CD8-positive, alpha-beta T cell (primary cell): ENCODE measurements at regions of chr2 and their contacts with region 1.

Region 1: GRCh38 chr2:173027181-173028128 is 48.2 kb upstream of the MAP3K20 start:
- DNase-seq: peak; percentile 39 to 84 (median 76)
- ATAC-seq: peak; percentile 79
- H3K4me3 ChIP-seq: no peak overlapping the region
- H3K4me3 Mint-ChIP-seq: no peak overlapping the region
- H3K27ac ChIP-seq: no peak overlapping the region
- H3K27ac Mint-ChIP-seq: no peak overlapping the region
- H3K4me1 ChIP-seq: no peaks in the 10 kb centered on the region
- H3K4me1 Mint-ChIP-seq: peaks cover 3% of the 10 kb centered on the region
- H3K27me3 ChIP-seq: peaks cover 0 to 2% of the 10 kb centered on the region in 2 experiments
- H3K27me3 Mint-ChIP-seq: peaks cover 5% of the 10 kb centered on the region
- CTCF ChIP-seq: peak; percentile 96

Region 2: DNA sequence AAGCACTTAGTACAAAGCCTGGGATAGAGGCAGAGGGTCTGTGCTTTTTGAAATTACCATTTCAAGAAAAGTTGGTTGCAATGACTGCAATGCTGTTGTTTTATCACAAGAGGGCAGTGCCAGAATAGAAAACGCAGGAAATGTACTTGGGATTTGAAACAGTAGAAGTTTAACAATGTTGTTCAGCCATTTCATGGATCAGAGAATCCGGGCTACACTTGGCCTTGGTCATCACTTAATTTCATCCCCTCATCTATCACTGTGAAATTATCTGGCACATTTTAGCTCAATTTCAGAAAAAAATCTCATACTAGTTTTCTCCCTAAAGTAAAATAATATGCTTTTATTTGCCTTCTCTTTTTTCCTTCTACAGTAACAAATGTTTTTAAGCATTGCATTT is 221.0 kb before region 1 on chr2:
- CTCF ChIA-PET with region 1: no interaction called
- POLR2A ChIA-PET with region 1: no interaction called
- intact Hi-C with region 1: loop called in 1 of 2 experiments (anchors 10 kb)
- DNase-seq: peak in 2 of 9 experiments; percentile 19 to 38
- ATAC-seq: no peak
- H3K4me3 ChIP-seq: no peak overlapping the region
- H3K4me3 Mint-ChIP-seq: no peak overlapping the region
- H3K27ac ChIP-seq: no peak overlapping the region
- H3K27ac Mint-ChIP-seq: no peak overlapping the region
- H3K4me1 ChIP-seq: no peaks in the 10 kb centered on the region
- H3K4me1 Mint-ChIP-seq: peaks cover 2% of the 10 kb centered on the region
- H3K27me3 ChIP-seq: peaks cover 0 to 4% of the 10 kb centered on the region in 2 experiments
- H3K27me3 Mint-ChIP-seq: no peaks in the 10 kb centered on the region
- CTCF ChIP-seq: peak; percentile 82

Region 3: DNA sequence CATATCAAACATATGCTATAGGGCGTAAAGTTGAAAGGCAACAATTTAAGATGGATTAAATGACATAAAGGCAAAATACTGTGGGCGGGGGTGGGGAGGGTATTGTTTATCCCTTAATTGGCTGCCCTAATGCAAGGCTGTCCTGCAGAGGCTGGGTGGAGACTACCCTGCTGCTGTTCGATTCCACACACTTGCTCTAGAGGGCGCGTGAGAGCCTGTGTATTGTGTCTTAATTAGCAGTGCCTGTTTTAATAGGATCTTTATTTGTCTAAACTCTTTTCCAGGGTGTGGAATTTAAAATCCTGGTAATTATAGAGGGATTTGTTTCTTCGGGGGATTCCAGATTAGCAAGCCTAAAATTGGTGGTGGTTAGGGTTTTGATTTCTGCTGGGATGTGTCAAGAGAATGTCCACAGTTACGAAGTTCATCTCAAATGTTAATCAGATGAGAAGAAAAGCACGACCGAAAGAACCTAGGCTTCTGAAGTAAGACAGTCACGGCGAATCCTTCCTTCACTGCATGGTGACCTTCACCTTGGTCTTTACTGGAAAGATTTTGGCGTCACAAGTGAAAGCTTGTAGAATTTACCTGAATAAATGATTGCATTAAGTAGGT is 55.3 kb before region 1 on chr2:
- CTCF ChIA-PET with region 1: interaction called, 4 read pairs
- POLR2A ChIA-PET with region 1: no interaction called
- intact Hi-C with region 1: loop called in 1 of 2 experiments (anchors 1 kb)
- DNase-seq: peak in 7 of 9 experiments; percentile 15 to 54 (median 25)
- ATAC-seq: peak; percentile 32
- H3K4me3 ChIP-seq: no peak overlapping the region
- H3K4me3 Mint-ChIP-seq: no peak overlapping the region
- H3K27ac ChIP-seq: no peak overlapping the region
- H3K27ac Mint-ChIP-seq: no peak overlapping the region
- H3K4me1 ChIP-seq: no peaks in the 10 kb centered on the region
- H3K4me1 Mint-ChIP-seq: peaks cover 18% of the 10 kb centered on the region
- H3K27me3 ChIP-seq: no peaks in the 10 kb centered on the region
- H3K27me3 Mint-ChIP-seq: peaks cover 4% of the 10 kb centered on the region
- CTCF ChIP-seq: peak; percentile 81

Region 4: DNA sequence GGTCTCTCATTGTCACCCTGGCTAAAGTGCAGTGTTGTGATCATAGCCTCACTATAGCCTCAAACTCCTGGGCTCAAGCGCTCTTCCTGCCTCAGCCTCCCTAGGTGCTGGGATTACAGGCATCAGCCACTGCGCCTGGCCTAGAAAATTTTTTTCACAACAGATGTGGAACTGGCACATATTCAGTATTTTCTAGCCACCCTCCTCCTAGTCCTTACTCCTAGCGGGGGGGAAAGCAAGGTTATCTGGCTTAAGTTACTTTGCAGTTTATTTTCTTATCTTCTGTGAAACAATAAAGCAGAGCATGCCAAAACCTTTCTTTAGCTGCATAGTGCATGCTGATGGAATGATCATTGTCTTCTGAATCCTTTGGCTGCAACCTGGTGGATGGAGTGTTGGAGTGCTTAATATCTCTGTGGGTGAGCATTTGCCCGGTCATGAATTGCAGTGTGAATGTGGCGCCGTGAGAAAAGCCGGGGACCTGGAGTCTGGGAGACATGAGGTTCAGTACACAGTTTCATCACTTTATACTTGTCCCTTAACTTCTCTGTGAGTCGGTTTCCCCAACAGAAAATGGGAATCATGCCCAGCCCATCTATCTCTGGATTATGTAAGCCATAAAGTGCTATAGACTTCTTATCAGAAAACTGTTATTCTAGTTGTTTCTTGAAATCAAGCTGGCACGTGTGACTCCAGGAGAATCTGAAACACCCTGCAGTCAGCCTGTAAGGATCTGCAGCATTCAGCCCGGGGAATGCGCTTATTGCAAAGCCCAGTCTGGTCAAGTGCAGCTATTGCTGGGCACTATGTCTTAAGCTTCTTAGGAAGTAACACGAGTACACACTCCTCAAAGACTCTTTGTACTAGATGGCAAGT is 10.0 kb after region 1 on chr2:
- CTCF ChIA-PET with region 1: interaction called, 13 read pairs
- POLR2A ChIA-PET with region 1: no interaction called
- intact Hi-C with region 1: no loop called
- DNase-seq: no peak
- ATAC-seq: no peak
- H3K4me3 ChIP-seq: no peak overlapping the region
- H3K4me3 Mint-ChIP-seq: no peak overlapping the region
- H3K27ac ChIP-seq: no peak overlapping the region
- H3K27ac Mint-ChIP-seq: no peak overlapping the region
- H3K4me1 ChIP-seq: no peaks in the 10 kb centered on the region
- H3K4me1 Mint-ChIP-seq: no peaks in the 10 kb centered on the region
- H3K27me3 ChIP-seq: no peaks in the 10 kb centered on the region
- H3K27me3 Mint-ChIP-seq: peaks cover 2% of the 10 kb centered on the region
- CTCF ChIP-seq: no peak

Region 5: DNA sequence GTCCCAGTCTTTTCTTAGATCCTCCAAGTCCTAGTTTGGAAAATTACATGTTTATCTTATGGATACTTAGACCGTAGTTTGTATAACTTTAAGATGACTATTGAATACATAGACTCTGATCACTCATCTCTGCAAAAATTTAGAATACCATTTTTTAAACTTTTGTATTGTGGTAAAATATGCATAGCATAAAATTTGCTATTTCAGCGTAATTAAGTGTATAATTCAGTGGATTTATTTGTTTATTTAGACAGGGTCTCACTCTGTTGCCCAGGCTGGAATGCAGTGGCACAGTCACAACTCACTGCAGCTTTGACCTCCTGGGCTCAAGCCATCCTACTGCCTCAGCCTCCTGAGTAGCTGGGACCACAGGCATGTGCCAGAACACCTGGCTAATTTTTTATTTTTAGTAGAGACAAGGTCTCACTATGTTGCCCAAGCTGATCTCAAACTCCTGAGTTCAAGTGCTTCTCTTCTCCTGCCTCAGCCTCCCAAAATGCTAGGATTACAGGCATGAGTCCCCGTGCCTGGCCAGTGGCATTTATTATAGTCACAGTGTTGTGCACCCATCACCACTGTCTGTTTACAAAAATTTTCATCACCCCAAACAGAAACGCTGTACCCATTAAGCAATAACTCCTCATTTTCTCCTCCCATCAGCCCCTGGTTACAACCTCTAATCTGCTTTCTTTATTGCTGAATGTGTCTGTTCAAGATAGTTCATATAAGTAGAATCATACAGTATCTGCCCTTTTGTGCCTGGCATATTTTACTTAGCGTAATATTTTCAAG is 138.2 kb after region 1 on chr2:
- CTCF ChIA-PET with region 1: no interaction called
- POLR2A ChIA-PET with region 1: no interaction called
- intact Hi-C with region 1: no loop called
- DNase-seq: no peak
- ATAC-seq: no peak
- H3K4me3 ChIP-seq: no peak overlapping the region
- H3K4me3 Mint-ChIP-seq: no peak overlapping the region
- H3K27ac ChIP-seq: no peak overlapping the region
- H3K27ac Mint-ChIP-seq: no peak overlapping the region
- H3K4me1 ChIP-seq: no peaks in the 10 kb centered on the region
- H3K4me1 Mint-ChIP-seq: no peaks in the 10 kb centered on the region
- H3K27me3 ChIP-seq: no peaks in the 10 kb centered on the region
- H3K27me3 Mint-ChIP-seq: peaks cover 4% of the 10 kb centered on the region
- CTCF ChIP-seq: no peak

Region 6: DNA sequence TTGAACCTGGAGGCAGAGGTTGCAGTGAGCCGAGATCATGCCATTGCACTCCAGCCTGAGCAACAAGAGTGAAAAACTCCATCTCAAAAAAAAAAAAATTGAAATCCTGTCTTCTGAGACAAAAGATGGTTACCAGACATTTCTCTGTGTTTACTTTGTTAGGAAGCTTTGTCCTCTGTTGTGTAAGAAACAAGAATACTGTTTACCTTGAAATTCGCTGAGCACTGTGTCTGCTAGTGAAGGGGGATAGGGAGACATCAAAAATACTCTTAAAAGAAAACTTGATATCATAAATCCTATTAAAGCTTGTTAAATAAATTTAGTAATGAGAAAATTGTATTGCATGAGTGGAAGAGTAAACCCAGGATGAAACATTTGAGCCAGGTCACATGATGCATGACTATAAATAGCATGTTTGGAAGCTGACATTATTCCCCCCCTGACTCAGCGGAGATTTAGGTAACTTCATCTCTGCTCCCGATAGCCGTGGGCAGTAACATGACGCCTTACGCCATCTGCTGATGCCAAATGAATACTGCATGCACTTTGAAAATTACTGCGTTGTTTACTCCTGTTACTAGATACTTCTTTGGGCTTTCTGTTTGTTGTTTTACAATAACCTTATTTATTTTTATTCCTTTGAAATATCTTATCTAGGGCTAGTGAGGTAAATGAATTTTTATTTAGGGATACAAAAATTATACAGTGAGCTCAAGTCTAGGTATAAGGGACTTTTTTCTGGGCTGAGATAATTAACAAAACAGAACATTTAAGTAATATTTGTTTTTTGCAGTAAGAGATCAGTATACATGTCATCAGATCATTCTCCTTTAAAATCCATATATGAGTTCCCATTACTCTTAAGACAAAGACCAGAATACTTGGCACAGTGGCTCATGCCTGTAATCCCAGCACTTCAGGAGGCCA is 183.1 kb after region 1 on chr2:
- CTCF ChIA-PET with region 1: interaction called, 236 read pairs
- POLR2A ChIA-PET with region 1: interaction called, 5 read pairs
- intact Hi-C with region 1: loop called (anchors 1 kb)
- DNase-seq: peak; percentile 2 to 77 (median 44)
- ATAC-seq: peak; percentile 77
- H3K4me3 ChIP-seq: no peak overlapping the region
- H3K4me3 Mint-ChIP-seq: no peak overlapping the region
- H3K27ac ChIP-seq: no peak overlapping the region
- H3K27ac Mint-ChIP-seq: no peak overlapping the region
- H3K4me1 ChIP-seq: no peaks in the 10 kb centered on the region
- H3K4me1 Mint-ChIP-seq: peaks cover 1% of the 10 kb centered on the region
- H3K27me3 ChIP-seq: no peaks in the 10 kb centered on the region
- H3K27me3 Mint-ChIP-seq: peaks cover 11% of the 10 kb centered on the region
- CTCF ChIP-seq: peak; percentile 91

Region 7: GRCh38 chr2:174546581-174547506 is 1519.4 kb after region 1 on chr2:
- CTCF ChIA-PET with region 1: no interaction called
- POLR2A ChIA-PET with region 1: no interaction called
- intact Hi-C with region 1: loop called in 1 of 2 experiments (anchors 10 kb)
- DNase-seq: peak in 5 of 9 experiments; percentile 8 to 66 (median 46)
- ATAC-seq: peak; percentile 83
- H3K4me3 ChIP-seq: no peak overlapping the region
- H3K4me3 Mint-ChIP-seq: no peak overlapping the region
- H3K27ac ChIP-seq: no peak overlapping the region
- H3K27ac Mint-ChIP-seq: peak overlapping the region; percentile 73
- H3K4me1 ChIP-seq: peaks cover 4% of the 10 kb centered on the region
- H3K4me1 Mint-ChIP-seq: peaks cover 23% of the 10 kb centered on the region
- H3K27me3 ChIP-seq: no peaks in the 10 kb centered on the region
- H3K27me3 Mint-ChIP-seq: no peaks in the 10 kb centered on the region
- CTCF ChIP-seq: no peak